ENCODE measurements at regions of chr6 and their contacts with region 1.

Region 1: GRCh38 chr6:150395398-150396009 is 26.7 kb downstream of the IYD start:
- DNase-seq: peak; percentile 46
- H3K4me3 Mint-ChIP-seq: no peak overlapping the region
- H3K27ac Mint-ChIP-seq: no peak overlapping the region
- H3K4me1 Mint-ChIP-seq: no peaks in the 10 kb centered on the region
- H3K27me3 Mint-ChIP-seq: peaks cover 8% of the 10 kb centered on the region

Region 2: DNA sequence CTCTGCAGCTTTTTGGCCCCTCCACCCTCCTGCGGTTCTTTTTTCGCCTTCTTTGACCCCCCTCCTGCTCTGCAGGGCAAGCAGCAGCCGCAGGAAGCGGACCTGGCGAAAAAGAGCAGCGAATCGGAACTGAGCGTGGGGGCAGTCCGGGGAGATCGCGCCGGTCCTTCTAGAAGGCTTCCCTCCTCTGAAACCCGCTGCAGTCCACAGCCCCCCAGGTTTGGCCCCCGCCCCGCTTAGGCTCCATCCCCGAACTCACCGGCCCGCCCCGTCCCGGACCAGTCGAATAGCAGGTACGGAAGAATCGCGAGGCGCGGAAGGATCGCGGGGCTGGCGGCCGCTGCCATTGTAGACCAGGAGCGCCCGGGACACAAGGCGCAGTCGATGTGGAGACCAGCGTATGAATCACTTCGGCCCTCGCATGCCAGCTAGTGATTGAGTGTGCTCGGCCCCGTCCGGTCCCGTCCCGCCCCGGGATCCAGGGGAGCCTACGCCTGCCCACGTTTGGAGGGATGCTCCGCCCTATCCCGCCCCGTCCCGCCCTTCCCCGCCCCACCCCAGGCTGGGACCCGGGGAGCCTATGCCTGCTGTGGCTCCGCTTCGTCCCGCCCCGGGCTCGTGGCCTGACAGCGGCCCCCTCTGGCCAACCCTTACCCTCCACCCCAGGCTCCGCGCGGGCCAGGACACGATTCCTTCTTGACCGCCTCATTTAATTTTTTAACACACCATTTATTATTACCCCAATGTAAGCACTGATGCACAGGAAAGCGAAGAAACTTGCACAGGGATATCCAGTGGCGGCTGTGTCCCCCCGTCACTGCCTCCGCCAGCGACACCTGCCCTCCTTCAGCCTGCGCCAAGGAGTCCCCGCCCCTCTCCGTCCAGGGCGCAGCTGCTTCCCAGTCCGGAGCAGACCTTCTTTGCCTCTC is 326.5 kb before region 1 on chr6 and contains the start of gene ULBP3:
- CTCF ChIA-PET with region 1: interaction called, 31 read pairs
- POLR2A ChIA-PET with region 1: no interaction called
- intact Hi-C with region 1: no loop called
- DNase-seq: peak; percentile 87
- H3K4me3 Mint-ChIP-seq: peak within 1 kb of the TSS; percentile 66
- H3K27ac Mint-ChIP-seq: no peak within 1 kb of the TSS
- H3K4me1 Mint-ChIP-seq: peaks cover 11% of the 10 kb centered on the region
- H3K27me3 Mint-ChIP-seq: peaks cover 13% of the 10 kb centered on the region
- total RNA-seq, gene ULBP3: 0.61 TPM in 1 of 2 experiments, not detected in the other

Region 3: DNA sequence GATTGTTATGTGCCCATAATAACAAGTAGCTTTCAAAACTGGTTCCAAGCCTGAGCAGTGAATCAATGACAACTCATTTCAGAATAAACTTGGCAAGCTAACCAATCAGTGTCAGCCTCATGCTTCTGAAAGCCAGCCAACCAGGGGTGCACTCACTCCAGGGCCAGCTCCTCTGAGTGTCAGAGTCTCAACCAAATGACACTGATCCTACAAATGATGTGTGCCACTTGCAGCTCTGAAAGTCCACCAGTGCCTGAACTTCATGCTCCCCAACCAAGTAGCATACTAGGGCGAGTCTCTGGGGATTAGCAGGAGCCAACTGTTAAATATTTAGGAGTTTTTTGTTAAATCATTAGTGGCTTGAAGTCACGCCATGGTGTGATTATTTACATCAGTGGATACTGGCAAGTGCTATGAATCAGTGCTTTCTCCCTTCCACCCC is 22.2 kb before region 1 on chr6:
- CTCF ChIA-PET with region 1: interaction called, 10 read pairs
- POLR2A ChIA-PET with region 1: no interaction called
- intact Hi-C with region 1: no loop called
- DNase-seq: peak; percentile 12
- H3K4me3 Mint-ChIP-seq: no peak overlapping the region
- H3K27ac Mint-ChIP-seq: no peak overlapping the region
- H3K4me1 Mint-ChIP-seq: no peaks in the 10 kb centered on the region
- H3K27me3 Mint-ChIP-seq: peaks cover 12% of the 10 kb centered on the region

Region 4: GRCh38 chr6:150409576-150410066 is 14.1 kb after region 1 on chr6:
- CTCF ChIA-PET with region 1: interaction called, 14 read pairs
- POLR2A ChIA-PET with region 1: no interaction called
- intact Hi-C with region 1: no loop called
- DNase-seq: no peak
- H3K4me3 Mint-ChIP-seq: no peak overlapping the region
- H3K27ac Mint-ChIP-seq: no peak overlapping the region
- H3K4me1 Mint-ChIP-seq: no peaks in the 10 kb centered on the region
- H3K27me3 Mint-ChIP-seq: peaks cover 50% of the 10 kb centered on the region

Measured in activated CD4-positive, alpha-beta memory T cell treated with anti-CD3 and anti-CD28 coated beads for 36 hours (primary cell).